ENCODE measurements at regions of chr19 and their contacts with region 1.

Region 1: DNA sequence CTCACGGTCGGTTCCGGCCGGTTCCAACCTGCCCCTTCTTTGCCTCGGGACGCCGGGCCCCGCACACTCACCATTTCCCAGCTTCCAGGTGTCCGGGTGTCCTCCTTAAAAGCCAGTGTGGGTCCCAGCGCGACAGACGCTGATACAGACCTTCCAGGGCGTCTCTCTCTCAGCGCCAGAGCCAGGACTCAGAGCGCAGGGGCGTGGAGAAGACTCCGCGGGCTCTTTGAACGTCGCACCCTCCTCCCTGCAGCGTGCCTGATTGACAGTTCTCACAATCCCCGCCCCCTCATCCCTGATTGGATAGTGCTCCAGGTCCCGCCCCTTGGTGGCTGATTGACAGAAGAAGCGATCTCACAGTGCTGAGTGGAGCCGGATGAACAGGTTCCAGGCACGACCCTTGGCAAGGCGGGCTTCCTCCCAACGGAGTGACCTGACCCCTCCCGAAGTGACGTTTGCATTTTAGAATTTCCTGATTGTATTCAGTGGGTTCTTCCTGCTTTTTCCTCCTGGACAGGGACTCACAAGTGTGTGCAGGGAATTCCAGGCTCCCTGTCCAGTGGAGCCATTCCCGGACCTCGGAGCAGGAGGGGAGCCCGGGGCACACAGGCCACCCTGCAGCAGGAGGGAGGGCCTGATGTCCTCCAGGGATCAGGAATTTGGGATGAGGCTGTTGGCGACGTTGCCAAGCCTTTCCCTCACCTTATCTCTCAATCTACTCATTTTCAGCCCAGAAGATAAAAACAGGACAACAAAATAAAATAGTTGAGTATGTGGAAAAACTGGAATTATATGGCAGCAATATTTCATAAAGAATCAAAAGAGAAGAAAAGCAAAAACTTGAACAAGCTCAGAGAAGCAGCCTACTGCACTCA is at the start of gene ZNF823:
- DNase-seq: peak; percentile 96 to 97
- ATAC-seq: peak; percentile 99
- H3K4me3 ChIP-seq: peak within 1 kb of the TSS; percentile 82 to 96 (median 87)
- H3K27ac ChIP-seq: peak within 1 kb of the TSS; percentile 77 to 88 (median 82)
- H3K4me1 ChIP-seq: peaks cover 8 to 14% of the 10 kb centered on the region in 2 donors
- H3K27me3 ChIP-seq: no peaks in the 10 kb centered on the region
- CTCF ChIP-seq: no peak
- POLR2A ChIP-seq: peak; percentile 46 to 59
- total RNA-seq, gene ZNF823: 1.4 to 4.1 (median 2.6) TPM

Region 2: DNA sequence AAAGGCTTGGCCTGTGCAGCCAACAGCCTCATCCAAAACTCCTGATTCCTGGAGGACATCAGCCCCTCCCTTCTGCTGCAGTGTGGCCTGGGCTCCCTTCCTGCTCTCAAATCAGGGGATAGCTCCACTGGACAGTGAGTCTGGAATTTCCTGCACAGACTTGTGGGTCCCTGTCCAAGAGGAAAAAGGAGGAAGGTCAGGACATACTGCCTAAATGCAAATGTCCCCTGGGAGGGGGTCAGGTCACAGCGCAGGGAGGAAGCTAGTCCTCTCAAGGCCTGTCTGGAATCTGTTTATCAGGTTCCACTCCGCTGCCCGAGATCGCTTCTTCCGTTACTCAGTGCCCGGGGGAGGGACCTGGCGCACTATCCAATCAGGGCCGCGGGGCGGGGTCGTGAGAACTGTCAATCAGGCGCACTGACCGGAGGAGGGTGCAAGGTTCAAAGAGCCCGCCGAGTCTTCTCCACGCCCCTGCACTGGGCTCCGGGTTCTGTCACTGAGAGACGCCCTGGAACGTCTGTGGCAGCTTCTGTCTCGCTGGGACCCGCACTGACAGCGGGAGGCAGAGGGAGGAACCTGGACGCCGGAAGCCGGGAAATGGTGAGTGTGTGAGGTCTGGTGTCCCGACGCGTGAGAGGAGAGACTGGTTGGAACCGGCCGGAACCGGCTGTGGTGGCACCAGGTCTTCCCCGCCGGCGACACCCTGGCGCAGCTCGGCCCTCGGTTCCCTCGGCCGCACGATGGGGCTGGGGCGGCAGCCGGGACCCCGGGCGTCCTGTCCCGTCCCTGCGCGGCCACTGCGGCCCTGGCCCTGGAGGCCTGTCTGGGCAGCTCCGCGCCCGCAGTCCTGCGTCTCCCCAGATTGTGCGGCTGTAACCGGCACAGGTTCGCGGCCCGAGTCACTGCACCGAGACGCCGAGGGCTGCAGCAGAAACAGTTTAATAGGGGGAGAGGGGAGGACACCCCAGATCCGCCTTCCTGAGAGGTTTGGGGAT is 27.9 kb after region 1 on chr19 and contains the start of gene ZNF441:
- in situ Hi-C with region 1: no loop called
- intact Hi-C with region 1: loop called (anchors 1 kb)
- DNase-seq: peak; percentile 95
- ATAC-seq: peak; percentile 97 to 98
- H3K4me3 ChIP-seq: peak within 1 kb of the TSS; percentile 71 to 86 (median 82)
- H3K27ac ChIP-seq: peak within 1 kb of the TSS; percentile 85 to 89 (median 86)
- H3K4me1 ChIP-seq: peaks cover 9 to 14% of the 10 kb centered on the region in 2 donors
- H3K27me3 ChIP-seq: no peaks in the 10 kb centered on the region
- CTCF ChIP-seq: no peak
- POLR2A ChIP-seq: peak; percentile 57 to 66
- total RNA-seq, gene ZNF441: 1.1 to 7.6 (median 2.9) TPM

Region 3: DNA sequence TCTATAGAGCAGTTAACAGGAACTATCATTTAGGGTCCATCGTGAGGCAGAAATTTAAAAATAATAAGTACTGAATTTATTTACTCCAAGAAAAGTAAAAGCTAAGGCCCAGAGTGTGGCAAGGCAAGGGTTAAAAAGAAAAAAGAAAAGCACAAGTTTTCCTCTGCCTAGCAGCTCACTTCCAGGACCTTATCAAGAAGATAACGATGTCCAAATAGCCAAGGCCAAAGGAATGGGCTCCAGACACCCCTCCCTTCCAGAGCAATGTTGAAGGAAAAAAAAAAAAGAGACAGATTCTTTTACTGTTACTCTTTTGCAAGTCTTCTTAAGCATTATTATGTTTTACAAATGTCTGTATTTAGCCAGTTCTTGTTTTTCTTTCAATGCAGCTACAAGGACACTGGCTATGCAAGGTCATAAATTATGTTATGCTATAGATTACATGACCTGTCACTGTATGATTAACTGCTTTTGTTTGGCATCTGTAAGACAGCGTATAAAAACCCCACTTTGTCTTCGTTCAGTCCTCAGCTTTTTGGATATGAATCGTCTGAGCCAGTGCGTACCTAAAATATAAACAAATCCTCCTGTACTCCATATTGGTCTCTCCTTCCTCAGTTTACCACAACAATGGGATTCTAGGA is 183.0 kb after region 1 on chr19:
- in situ Hi-C with region 1: no loop called
- intact Hi-C with region 1: no loop called
- DNase-seq: no peak
- ATAC-seq: no peak
- H3K4me3 ChIP-seq: no peak overlapping the region
- H3K27ac ChIP-seq: no peak overlapping the region
- H3K4me1 ChIP-seq: peaks cover 4 to 20% of the 10 kb centered on the region in 2 donors
- H3K27me3 ChIP-seq: no peaks in the 10 kb centered on the region
- CTCF ChIP-seq: no peak
- POLR2A ChIP-seq: no peak

Region 4: DNA sequence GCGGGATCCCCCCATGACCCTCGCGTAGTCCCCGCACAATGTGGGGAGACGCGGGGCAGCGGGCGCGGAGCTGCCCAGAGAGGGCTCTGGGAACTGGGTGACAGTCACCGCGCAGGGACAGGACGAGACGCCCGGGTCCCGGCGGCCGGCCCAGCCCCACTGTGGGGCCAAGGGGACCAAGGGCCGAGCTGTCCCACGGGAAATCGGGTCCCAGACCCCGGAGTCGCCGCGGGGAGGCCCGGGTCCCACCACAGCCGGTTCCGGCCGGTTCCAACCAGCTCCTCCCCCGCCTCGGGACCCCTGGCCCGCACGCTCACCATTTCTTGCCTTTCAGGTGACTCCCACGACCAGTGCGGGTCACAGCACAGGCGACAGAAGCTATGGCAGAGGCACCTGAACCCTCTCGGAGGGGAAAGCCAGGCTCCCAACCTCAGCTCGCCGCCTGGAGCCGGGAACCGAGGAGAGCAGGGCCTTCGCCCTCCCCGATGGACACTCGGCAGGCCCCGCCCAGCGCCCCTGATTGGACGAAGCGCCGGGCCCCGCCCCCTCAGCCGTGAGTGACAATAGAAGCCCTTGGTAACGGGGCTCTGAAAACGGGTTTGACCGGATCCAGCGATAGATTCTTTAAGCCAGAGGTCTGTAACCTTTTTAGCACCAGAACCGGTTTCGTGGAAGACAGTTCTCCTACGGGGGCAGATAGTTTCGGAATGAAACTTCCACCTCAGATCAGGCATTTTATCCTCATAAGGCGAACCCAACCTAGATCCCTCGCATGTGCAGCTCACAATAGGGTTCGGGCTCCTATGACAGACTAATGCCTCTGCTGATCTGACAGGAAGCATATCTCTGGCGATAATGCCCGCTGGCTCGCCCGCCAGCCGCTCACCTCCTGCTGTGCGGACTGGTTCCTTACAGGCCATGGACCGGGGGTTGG is 296.5 kb after region 1 on chr19 and contains the start of gene ZNF433:
- in situ Hi-C with region 1: no loop called
- intact Hi-C with region 1: loop called (anchors 1 kb)
- DNase-seq: peak; percentile 84 to 86
- ATAC-seq: peak; percentile 99
- H3K4me3 ChIP-seq: peak within 1 kb of the TSS; percentile 86 to 95 (median 90)
- H3K27ac ChIP-seq: peak within 1 kb of the TSS; percentile 87 to 92 (median 90)
- H3K4me1 ChIP-seq: peaks cover 8 to 10% of the 10 kb centered on the region in 2 donors
- H3K27me3 ChIP-seq: no peaks in the 10 kb centered on the region
- CTCF ChIP-seq: no peak
- POLR2A ChIP-seq: peak; percentile 52 to 58
- total RNA-seq, gene ZNF433: 3.6 to 8.2 (median 5.0) TPM

Measured in gastrocnemius medialis (tissue), 4 donors.